CD4-positive, alpha-beta T cell (primary cell): ENCODE measurements at regions of chr22 and their contacts with region 1.

Region 1: GRCh38 chr22:24037851-24038765 is 27.0 kb downstream of the CABIN1 start:
- DNase-seq: peak; percentile 22 to 72 (median 52)
- ATAC-seq: peak; percentile 93
- H3K4me3 ChIP-seq: no peak overlapping the region
- H3K4me3 Mint-ChIP-seq: peak overlapping the region; percentile 72
- H3K27ac ChIP-seq: peak overlapping the region; percentile 31
- H3K27ac Mint-ChIP-seq: peak overlapping the region; percentile 93
- H3K4me1 ChIP-seq: peaks cover 39% of the 10 kb centered on the region
- H3K4me1 Mint-ChIP-seq: peaks cover 64% of the 10 kb centered on the region
- H3K27me3 ChIP-seq: no peaks in the 10 kb centered on the region
- H3K27me3 Mint-ChIP-seq: no peaks in the 10 kb centered on the region
- CTCF ChIP-seq: no peak

Region 2: DNA sequence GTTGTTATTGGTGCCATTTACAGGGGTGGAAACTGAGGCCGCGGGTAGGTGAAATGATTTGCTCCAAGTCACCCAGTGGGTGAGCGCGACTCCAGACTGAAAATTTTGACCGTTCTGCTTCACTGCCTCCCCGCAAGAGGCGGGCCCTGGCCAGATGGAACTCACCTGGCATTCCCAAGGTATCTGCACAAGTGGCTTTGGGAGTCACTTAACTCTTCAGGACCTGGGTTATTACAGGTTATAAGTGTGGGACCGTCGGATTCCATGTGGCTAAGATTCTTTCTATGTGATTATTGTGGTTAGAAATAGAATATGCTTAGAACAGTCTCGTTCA is 26.4 kb before region 1 on chr22:
- CTCF ChIA-PET with region 1: no interaction called
- POLR2A ChIA-PET with region 1: interaction called, 68 read pairs
- intact Hi-C with region 1: no loop called
- DNase-seq: no peak
- ATAC-seq: no peak
- H3K4me3 ChIP-seq: peak overlapping the region; percentile 99
- H3K4me3 Mint-ChIP-seq: peak overlapping the region; percentile 99
- H3K27ac ChIP-seq: peak overlapping the region; percentile 73 to 86
- H3K27ac Mint-ChIP-seq: peak overlapping the region; percentile 94
- H3K4me1 ChIP-seq: peaks cover 22% of the 10 kb centered on the region
- H3K4me1 Mint-ChIP-seq: peaks cover 48% of the 10 kb centered on the region
- H3K27me3 ChIP-seq: no peaks in the 10 kb centered on the region
- H3K27me3 Mint-ChIP-seq: no peaks in the 10 kb centered on the region
- CTCF ChIP-seq: no peak